ENCODE measurements at regions of chr18 and their contacts with region 1.

Region 1: GRCh38 chr18:38284972-38285371 is 719.4 kb upstream of the CELF4 start:
- DNase-seq: no peak
- ATAC-seq: no peak
- H3K4me3 Mint-ChIP-seq: no peak overlapping the region
- H3K27ac Mint-ChIP-seq: no peak overlapping the region
- H3K4me1 Mint-ChIP-seq: no peaks in the 10 kb centered on the region
- H3K27me3 Mint-ChIP-seq: no peaks in the 10 kb centered on the region

Region 2: DNA sequence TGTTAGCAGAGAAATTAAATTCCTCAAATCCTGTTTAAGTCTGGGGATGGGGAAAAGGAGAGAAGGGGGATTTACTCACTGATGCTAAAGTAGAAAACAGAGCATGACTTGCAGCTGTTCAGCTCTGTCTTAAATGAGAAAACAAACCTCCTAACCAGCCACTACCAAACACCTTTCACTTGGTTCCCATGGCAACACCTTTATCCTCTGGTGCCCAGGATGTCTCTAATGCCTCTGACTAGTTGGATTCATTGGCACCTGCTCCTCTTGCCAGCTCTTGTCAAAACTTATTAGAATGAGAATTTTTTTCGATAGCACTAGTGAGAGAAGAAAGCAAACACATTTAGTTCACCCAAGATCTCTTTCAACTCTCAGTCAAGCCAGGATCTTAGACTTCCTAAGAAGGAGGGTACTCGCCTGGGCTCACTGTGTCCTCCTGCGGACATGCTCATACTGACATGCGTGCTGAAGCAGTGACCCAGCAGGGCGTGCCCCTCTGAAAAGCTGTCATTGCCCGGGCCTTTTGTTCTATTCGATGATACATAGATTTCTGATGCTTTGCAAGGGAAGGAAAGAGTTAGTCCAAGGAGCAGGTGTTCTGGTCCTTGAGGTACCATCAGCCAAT is 63.4 kb before region 1 on chr18:
- CTCF ChIA-PET with region 1: no interaction called
- POLR2A ChIA-PET with region 1: no interaction called
- intact Hi-C with region 1: loop called in 1 of 2 experiments (anchors 10 kb)
- DNase-seq: no peak
- ATAC-seq: no peak
- H3K4me3 Mint-ChIP-seq: no peak overlapping the region
- H3K27ac Mint-ChIP-seq: no peak overlapping the region
- H3K4me1 Mint-ChIP-seq: no peaks in the 10 kb centered on the region
- H3K27me3 Mint-ChIP-seq: no peaks in the 10 kb centered on the region

Measured in activated CD4-positive, alpha-beta T cell treated with anti-CD3 and anti-CD28 coated beads for 36 hours (primary cell).